Left ventricle myocardium inferior (tissue), 1 donor: ENCODE measurements at regions of chr7 and their contacts with region 1.

Region 1: DNA sequence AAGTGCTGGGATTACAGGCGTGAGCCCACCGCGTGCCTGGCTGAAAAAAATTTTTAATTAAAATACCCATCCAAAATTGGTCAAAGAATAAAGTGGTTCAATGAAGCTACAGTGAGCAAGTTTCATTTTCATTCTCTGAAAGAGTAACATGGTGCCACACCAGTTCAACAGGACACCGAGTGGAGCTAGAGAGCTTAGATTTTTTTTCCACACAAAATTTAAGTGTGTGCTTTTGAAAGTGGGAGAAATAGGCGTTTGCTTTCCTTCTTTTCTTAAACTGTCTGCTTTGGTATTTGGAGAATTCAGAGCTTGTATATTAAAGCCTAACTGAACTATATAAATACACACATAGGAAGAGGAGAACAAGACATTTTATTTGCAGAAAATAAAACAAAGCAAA is 43.4 kb downstream of the BPGM start:
- DNase-seq: no peak
- H3K4me3 ChIP-seq: peak overlapping the region; percentile 50
- H3K27ac ChIP-seq: peak overlapping the region; percentile 56
- H3K4me1 ChIP-seq: peaks cover 13% of the 10 kb centered on the region
- H3K27me3 ChIP-seq: no peaks in the 10 kb centered on the region
- CTCF ChIP-seq: peak; percentile 67

Region 2: GRCh38 chr7:134619627-134620331 is 70.2 kb before region 1 on chr7:
- intact Hi-C with region 1: no loop called
- DNase-seq: no peak
- H3K4me3 ChIP-seq: no peak overlapping the region
- H3K27ac ChIP-seq: no peak overlapping the region
- H3K4me1 ChIP-seq: peaks cover 6% of the 10 kb centered on the region
- H3K27me3 ChIP-seq: peaks cover 25% of the 10 kb centered on the region
- CTCF ChIP-seq: no peak

Region 3: DNA sequence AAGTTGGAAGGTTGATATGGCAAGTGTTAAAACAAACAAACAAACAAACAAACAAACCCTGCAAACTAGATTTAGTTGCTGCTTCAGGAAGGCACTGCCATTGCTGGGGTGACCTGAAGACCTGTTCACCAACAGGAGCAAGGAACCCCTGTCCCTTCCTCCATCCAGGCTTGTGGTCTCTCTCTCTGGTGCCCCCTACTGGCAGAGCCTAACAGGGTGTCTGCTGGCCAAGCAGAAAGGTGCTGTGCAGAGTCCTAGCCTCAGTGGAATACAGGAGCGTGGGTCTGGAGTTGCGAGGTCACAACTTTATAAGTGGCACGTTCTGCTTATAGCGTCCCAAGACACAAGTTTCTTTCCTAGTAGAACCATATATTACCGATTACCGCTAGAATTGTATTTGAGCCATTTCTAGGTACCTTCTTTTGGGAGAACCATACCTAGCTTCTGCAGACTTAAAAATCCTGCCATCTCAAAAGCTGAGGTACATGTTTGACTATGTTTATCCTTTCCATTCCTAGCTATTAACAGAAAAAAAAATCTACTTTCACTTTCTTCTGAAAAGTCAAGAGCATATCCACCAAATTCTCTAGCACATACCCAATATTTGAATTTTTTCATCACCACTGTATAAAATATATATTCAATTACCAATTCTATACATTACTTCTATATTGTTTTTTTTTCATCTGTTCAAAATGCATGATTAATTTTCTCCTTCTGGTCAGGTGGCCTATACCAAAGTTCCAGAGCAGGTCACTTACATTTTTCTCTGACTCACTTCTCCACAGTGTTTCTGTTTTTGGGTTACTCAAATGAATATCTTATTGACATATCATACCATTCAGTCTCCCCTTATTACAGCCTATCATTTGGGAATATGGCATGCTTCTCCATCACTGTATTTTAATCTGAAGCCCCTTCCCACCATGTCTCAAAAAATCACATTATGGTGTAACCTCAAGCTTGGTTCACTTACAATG is 60.4 kb after region 1 on chr7:
- intact Hi-C with region 1: loop called (anchors 10 kb)
- DNase-seq: no peak
- H3K4me3 ChIP-seq: no peak overlapping the region
- H3K27ac ChIP-seq: no peak overlapping the region
- H3K4me1 ChIP-seq: peaks cover 3% of the 10 kb centered on the region
- H3K27me3 ChIP-seq: no peaks in the 10 kb centered on the region
- CTCF ChIP-seq: peak; percentile 75

Region 4: DNA sequence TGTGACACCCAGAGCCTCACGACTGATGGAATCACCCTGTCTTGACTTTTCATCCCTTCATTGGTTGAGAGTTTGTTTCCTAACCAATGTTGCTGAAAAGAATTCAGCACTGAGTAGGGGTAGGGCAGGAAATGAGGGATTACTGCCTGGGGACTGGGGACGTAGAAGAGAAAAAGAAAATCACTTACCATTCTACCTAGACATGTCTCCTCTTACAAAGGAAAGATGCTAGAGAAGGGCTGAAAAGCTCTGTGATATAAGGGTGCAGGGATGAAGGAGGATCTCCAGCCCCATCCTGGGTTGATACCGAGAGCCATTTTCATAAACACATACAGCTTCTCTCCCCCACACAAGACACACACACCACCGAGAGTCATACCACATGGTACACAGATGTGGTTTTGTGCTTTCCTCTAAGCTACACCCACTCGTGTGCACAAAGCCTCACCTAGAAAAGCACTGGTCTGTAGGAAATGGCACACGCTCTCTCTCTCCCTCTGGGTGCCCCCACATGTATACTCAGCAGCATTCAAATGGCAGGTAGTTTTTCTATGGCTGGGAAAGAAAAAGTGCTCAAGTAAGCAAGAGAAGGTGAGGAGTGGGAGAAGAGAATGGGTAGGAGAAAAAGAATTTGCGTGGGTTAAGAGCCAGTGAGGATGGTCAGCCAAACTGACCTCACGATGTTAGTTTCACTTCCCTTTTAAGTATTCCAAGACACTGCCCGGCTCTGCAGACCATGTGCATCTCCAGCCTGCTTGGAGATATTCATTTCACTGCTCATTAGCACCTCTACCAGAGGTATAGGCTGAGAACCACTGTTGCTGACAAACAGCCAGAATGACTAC is 175.2 kb after region 1 on chr7:
- intact Hi-C with region 1: no loop called
- DNase-seq: no peak
- H3K4me3 ChIP-seq: peak overlapping the region; percentile 52
- H3K27ac ChIP-seq: peak overlapping the region; percentile 83
- H3K4me1 ChIP-seq: peaks cover 69% of the 10 kb centered on the region
- H3K27me3 ChIP-seq: no peaks in the 10 kb centered on the region
- CTCF ChIP-seq: no peak

Region 5: GRCh38 chr7:134946260-134946659 is 256.2 kb after region 1 on chr7:
- intact Hi-C with region 1: loop called (anchors 5 kb)
- DNase-seq: no peak
- H3K4me3 ChIP-seq: no peak overlapping the region
- H3K27ac ChIP-seq: no peak overlapping the region
- H3K4me1 ChIP-seq: peaks cover 8% of the 10 kb centered on the region
- H3K27me3 ChIP-seq: no peaks in the 10 kb centered on the region
- CTCF ChIP-seq: no peak